Activated T-helper 2 cell treated with anti-CD3 and anti-CD28 coated beads, Interferon-gamma antibody, Interleukin-2, Interleukin-4, amounts not matched to agents 10 μg/mL and 5 μg/mL and 100 μg/mL, durations not matched to agents 14 hours and 24 hours and 36 hours (primary cell): ENCODE measurements at regions of chrX and their contacts with region 1.

Region 1: DNA sequence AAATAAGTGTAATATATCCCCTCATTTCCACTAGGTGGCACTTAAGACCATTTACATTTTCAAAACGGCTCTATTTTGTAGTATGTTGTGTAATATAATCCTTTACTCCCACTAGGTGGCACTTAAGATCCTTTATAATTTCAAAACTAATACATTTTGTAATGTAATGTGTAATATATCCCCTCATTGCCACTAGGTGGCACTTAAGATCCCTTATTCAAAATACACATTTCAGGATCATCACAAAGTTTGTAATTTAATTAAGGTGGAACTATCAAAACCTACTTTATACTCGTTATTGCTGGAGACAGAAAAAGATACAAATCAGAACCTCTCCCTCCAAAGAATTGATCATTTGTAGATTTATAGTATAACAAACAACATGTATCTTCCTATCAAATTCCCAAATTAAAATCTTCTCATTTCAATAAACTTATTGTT is 132.5 kb downstream of the ARHGAP6 start:
- DNase-seq: no peak
- H3K4me3 Mint-ChIP-seq: no peak overlapping the region
- H3K27ac Mint-ChIP-seq: no peak overlapping the region
- H3K4me1 Mint-ChIP-seq: no peaks in the 10 kb centered on the region
- H3K27me3 Mint-ChIP-seq: peaks cover 4% of the 10 kb centered on the region

Region 2: GRCh38 chrX:11143931-11144678 is 389.1 kb before region 1 on chrX:
- intact Hi-C with region 1: loop called (anchors 5 kb)
- DNase-seq: peak; percentile 26
- H3K4me3 Mint-ChIP-seq: no peak overlapping the region
- H3K27ac Mint-ChIP-seq: no peak overlapping the region
- H3K4me1 Mint-ChIP-seq: no peaks in the 10 kb centered on the region
- H3K27me3 Mint-ChIP-seq: peaks cover 4% of the 10 kb centered on the region

Region 3: GRCh38 chrX:11609109-11609730 is 76.0 kb after region 1 on chrX:
- intact Hi-C with region 1: no loop called
- DNase-seq: no peak
- H3K4me3 Mint-ChIP-seq: no peak overlapping the region
- H3K27ac Mint-ChIP-seq: no peak overlapping the region
- H3K4me1 Mint-ChIP-seq: no peaks in the 10 kb centered on the region
- H3K27me3 Mint-ChIP-seq: no peaks in the 10 kb centered on the region

Region 4: GRCh38 chrX:11724122-11725017 is 191.1 kb after region 1 on chrX:
- intact Hi-C with region 1: loop called (anchors 1 kb)
- DNase-seq: no peak
- H3K4me3 Mint-ChIP-seq: no peak overlapping the region
- H3K27ac Mint-ChIP-seq: no peak overlapping the region
- H3K4me1 Mint-ChIP-seq: no peaks in the 10 kb centered on the region
- H3K27me3 Mint-ChIP-seq: peaks cover 9% of the 10 kb centered on the region

Region 5: DNA sequence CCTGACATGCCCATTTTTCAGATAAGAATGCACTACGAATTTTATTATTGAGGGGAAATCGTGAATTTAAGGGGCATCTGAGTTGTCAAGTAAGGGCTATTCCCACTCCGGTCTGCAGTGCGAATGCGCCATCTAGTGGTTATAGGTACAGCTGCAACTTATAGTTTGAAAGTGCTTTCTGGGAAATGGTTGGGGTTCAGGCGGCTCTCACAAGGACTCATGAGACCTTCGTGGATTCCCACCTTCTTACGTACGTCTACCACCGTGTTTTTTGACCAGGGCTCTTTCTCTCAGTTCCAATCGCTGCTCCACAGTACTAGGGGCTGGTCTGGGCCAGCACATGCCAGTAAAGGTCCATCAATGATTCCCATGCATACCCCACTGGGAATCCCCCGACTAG is 237.1 kb after region 1 on chrX:
- intact Hi-C with region 1: loop called (anchors 1 kb)
- DNase-seq: no peak
- H3K4me3 Mint-ChIP-seq: no peak overlapping the region
- H3K27ac Mint-ChIP-seq: peak overlapping the region; percentile 60
- H3K4me1 Mint-ChIP-seq: peaks cover 28% of the 10 kb centered on the region
- H3K27me3 Mint-ChIP-seq: no peaks in the 10 kb centered on the region

Region 6: DNA sequence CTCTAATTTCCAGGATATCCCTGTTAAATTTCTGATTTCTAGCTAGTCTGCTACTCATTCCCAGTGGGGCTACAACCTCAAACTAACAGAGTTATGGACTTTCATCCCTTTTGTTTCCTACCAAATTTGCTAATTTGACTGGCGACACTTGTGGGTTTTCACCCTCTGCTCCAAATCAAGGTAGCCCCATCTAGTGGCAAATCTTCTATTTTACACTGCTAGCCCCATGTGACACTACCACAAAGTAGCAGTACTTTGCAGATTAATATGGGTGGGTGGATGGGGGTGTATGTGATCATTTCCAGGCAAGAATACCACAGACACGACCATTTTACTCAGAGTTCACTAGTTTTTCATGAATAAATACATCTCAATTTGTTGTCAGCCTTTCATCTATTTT is 375.1 kb after region 1 on chrX:
- intact Hi-C with region 1: loop called (anchors 2 kb)
- DNase-seq: peak; percentile 8
- H3K4me3 Mint-ChIP-seq: no peak overlapping the region
- H3K27ac Mint-ChIP-seq: no peak overlapping the region
- H3K4me1 Mint-ChIP-seq: no peaks in the 10 kb centered on the region
- H3K27me3 Mint-ChIP-seq: peaks cover 2% of the 10 kb centered on the region

Region 7: DNA sequence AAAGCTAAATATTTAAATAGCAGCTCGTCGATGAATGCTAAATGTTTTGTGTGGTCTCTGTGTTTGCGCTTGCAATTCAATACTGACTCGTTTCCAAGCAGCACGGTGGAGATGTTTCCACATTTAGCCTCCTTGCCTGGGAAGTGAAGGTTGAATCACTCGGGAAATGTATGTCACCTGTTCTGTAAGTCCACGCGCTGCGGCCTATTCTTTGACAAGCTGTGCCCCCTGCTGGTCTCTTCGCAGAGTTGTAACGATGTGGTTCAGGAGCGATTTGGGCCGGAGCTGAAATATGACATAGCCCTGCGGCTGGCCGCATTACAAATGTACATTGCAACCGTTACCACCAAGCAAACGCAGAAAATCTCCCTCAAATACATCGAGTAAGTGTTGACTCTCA is 1168.4 kb after region 1 on chrX:
- intact Hi-C with region 1: loop called (anchors 5 kb)
- DNase-seq: no peak
- H3K4me3 Mint-ChIP-seq: no peak overlapping the region
- H3K27ac Mint-ChIP-seq: no peak overlapping the region
- H3K4me1 Mint-ChIP-seq: no peaks in the 10 kb centered on the region
- H3K27me3 Mint-ChIP-seq: peaks cover 8% of the 10 kb centered on the region